Right ventricle myocardium inferior (tissue), 1 donor: ENCODE measurements at regions of chr16 and their contacts with region 1.

Region 1: DNA sequence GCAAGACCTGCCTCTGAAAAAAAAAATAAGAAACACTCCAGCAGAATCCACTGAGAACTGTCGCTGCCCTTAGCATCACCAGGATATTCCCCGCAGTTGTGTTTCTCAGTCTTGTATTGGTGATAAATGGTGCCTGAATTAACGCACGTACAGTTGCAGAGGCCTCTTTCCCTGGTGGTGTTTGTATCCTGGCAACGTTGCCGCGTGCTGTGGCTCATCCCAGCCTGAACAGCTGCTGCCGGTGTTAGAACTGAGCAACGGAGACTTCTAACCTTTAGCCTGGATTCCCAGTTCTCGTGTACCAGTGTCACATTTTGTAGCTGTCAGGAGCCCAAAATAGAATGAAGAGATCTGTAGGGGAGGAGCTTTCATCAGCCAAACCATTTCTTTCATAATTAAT is 4.8 kb downstream of the MLYCD start:
- DNase-seq: peak; percentile 80
- ATAC-seq: peak; percentile 76

Region 2: GRCh38 chr16:84055366-84055765 is 151.6 kb after region 1 on chr16:
- intact Hi-C with region 1: loop called (anchors 5 kb)
- DNase-seq: no peak
- ATAC-seq: peak; percentile 69